AG04450 (cell line): ENCODE measurements at regions of chr19 and their contacts with region 1.

Region 1: DNA sequence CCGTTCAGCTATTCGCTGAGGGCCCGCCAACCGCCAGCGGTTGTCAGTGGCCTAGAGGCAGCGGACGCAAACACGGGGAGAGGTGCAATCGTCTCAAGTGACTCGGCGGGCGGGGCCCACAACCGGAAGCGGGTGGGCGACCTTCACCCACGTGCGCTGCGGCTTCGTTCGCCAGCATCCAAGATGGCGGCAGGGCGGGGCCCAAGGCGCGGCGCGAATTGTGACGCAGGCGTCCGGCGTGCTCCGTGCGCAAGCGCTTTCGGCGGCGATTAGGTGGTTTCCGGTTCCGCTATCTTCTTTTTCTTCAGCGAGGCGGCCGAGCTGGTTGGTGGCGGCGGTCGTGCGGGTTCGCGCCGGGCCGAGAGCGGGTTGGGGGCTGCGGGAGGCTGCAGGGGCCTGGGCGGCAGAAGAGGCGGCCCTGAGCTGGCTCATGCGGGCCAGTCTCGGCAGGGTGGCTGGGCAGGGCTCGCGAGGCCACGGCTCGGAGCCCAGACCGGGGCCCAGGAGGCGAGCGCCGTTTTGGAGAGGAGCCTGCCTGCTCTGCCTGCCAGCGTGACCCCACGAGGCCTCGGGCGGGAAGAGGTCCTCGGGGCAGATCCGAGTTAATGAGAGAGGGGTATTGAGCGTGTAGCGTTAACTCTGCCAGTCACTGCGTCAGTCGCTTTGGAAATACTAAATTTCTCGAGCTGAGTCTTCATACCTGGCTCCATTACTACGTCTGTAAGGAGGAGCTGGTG is at the start of gene UBA52:
- DNase-seq: peak; percentile 91
- H3K4me3 ChIP-seq: peak within 1 kb of the TSS; percentile 98
- H3K27ac ChIP-seq: peak within 1 kb of the TSS; percentile 83
- H3K27me3 ChIP-seq: no peaks in the 10 kb centered on the region
- CTCF ChIP-seq: no peak
- polyA plus RNA-seq, gene UBA52: 1,723 and 2,315 TPM in 2 replicates

Region 2: DNA sequence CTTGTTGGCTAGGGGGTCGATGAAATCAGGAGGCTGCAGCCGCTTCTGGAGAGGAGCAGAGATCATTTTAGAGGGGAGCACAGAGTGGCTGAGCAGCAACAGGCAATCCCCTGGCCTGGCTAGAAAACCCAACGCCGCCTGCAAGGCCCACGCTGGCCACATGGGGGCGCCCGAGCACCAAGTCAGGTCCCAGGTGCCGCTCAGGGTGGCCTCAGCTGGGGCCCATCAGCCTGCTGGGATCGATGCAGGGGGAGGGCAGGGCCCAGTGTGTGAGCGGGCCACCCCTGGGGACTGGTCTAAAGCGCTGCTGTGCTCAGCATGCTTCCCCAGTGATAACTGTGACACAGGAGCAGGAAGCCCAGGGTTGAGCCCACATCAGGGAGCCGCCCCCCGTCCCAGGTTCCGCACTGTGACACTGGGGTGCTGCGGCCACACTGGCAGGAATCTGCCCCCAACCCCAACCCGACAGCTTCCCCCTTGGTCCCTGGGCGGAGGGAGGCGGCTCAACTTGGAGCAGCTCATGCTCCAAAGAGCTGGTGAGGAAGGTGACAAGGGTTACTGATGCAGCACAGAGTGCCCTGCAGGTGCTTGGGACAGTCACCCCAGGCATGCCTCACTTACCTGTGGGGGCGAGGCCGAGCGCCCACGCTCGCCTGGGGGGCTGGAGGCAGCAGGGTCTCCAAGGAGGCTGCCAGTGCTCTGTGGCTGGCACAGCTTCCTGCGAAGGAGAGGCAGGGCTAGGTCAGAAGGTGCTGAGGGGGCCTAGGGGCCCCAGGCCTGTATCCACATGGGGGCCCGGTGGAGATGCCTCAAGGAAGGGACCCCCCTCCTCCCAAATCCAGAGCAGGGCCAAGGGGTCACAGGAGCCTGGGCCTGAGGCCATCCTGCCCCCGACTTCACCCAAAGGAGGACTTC is 120.5 kb before region 1 on chr19:
- CTCF ChIA-PET with region 1: interaction called, 10 read pairs
- POLR2A ChIA-PET with region 1: interaction called, 4 read pairs
- DNase-seq: no peak
- H3K4me3 ChIP-seq: no peak overlapping the region
- H3K27ac ChIP-seq: peak overlapping the region; percentile 11
- H3K27me3 ChIP-seq: no peaks in the 10 kb centered on the region
- CTCF ChIP-seq: peak; percentile 95

Region 3: DNA sequence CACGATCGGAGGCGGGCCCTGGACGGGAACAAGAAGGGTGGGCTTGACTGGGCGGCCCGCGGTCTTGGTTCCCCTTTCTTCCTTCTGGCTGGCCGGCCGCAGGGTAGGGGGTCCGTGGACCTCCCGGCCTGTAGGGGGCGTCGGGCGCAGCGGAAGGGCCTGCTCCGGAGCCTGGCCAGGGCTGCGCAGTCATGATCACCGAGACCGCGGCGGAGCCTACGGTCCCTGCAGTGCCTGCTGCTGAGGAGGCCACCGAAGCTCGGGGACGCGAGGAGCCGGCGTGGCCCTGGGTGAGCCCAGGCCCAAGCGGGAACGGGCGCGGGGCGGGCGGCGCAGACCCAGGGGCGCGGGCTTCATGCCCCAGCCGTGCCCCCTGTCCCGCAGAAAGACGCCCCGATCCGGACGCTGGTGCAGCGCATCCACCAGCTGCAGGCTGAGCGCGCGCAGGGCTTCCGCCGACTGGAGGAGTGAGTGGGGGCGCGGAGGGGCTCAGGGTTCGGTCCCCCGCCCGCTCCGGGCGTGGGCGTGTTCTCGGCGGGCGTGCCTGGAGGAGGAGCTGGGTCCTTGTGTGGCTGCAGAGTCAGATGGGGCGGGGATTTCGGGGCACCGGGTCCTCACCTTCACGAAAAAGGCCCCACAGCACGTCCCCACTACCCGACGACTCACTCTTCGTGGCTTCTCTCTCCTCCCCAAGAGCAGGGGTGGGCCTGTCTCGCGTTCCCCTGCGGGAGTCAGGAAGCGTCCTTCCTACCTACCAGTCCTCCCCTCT is 17.1 kb after region 1 on chr19 and contains the start of gene REX1BD:
- CTCF ChIA-PET with region 1: interaction called, 5 read pairs
- POLR2A ChIA-PET with region 1: interaction called, 28 read pairs
- DNase-seq: no peak
- H3K4me3 ChIP-seq: peak within 1 kb of the TSS; percentile 82
- H3K27ac ChIP-seq: peak within 1 kb of the TSS; percentile 77
- H3K27me3 ChIP-seq: no peaks in the 10 kb centered on the region
- CTCF ChIP-seq: peak; percentile 82
- polyA plus RNA-seq, gene REX1BD: 17.6 TPM in 2 replicates